Stomach (tissue), 19 donors: ENCODE measurements at regions of chr15 and their contacts with region 1.

Region 1: GRCh38 chr15:74889883-74890664 is at the start of gene MPI:
- DNase-seq: peak; percentile 87 to 96
- H3K4me3 ChIP-seq: peak within 1 kb of the TSS; percentile 75 to 93 (median 88)
- H3K27ac ChIP-seq: peak within 1 kb of the TSS; percentile 70 to 90 (median 81)
- H3K4me1 ChIP-seq: peaks cover 12 to 53% (median 35%) of the 10 kb centered on the region in 4 donors
- H3K27me3 ChIP-seq: no peaks in the 10 kb centered on the region
- CTCF ChIP-seq: peak in 4 of 7 experiments; percentile 13 to 36 (median 24)
- EP300 ChIP-seq: no peak
- POLR2A ChIP-seq: peak in 1 of 4 donors; percentile 35
- total RNA-seq, gene MPI: 17.0 to 35.7 (median 20.4) TPM

Region 2: GRCh38 chr15:74768771-74769342 is 121.2 kb before region 1 on chr15:
- intact Hi-C with region 1: no loop called
- DNase-seq: peak; percentile 75
- H3K4me3 ChIP-seq: no peak overlapping the region
- H3K27ac ChIP-seq: no peak overlapping the region
- H3K4me1 ChIP-seq: peaks cover 0 to 18% (median 15%) of the 10 kb centered on the region in 4 donors
- H3K27me3 ChIP-seq: peaks cover 0 to 23% (median 0%) of the 10 kb centered on the region in 3 donors
- CTCF ChIP-seq: peak in 5 of 7 experiments; percentile 59 to 87 (median 74)
- EP300 ChIP-seq: no peak
- POLR2A ChIP-seq: no peak

Region 3: GRCh38 chr15:74842581-74843444 is 47.3 kb before region 1 on chr15 and contains the start of gene ULK3:
- intact Hi-C with region 1: loop called (anchors 10 kb)
- DNase-seq: peak; percentile 93 to 97
- H3K4me3 ChIP-seq: peak within 1 kb of the TSS; percentile 75 to 84 (median 80)
- H3K27ac ChIP-seq: peak within 1 kb of the TSS; percentile 85 to 93 (median 88)
- H3K4me1 ChIP-seq: peaks cover 22 to 56% (median 37%) of the 10 kb centered on the region in 4 donors
- H3K27me3 ChIP-seq: no peaks in the 10 kb centered on the region
- CTCF ChIP-seq: peak in 5 of 7 experiments; percentile 55 to 90 (median 64)
- EP300 ChIP-seq: no peak
- POLR2A ChIP-seq: no peak
- total RNA-seq, gene ULK3: 25.0 to 251 (median 50.7) TPM

Region 4: GRCh38 chr15:75029378-75030022 is 139.4 kb after region 1 on chr15:
- intact Hi-C with region 1: no loop called
- DNase-seq: peak; percentile 96
- H3K4me3 ChIP-seq: peak overlapping the region; percentile 2 to 23 (median 20)
- H3K27ac ChIP-seq: peak overlapping the region; percentile 5 to 75 (median 74)
- H3K4me1 ChIP-seq: peaks cover 16 to 49% (median 38%) of the 10 kb centered on the region in 4 donors
- H3K27me3 ChIP-seq: no peaks in the 10 kb centered on the region
- CTCF ChIP-seq: peak in 5 of 7 experiments; percentile 90 to 98 (median 94)
- EP300 ChIP-seq: no peak
- POLR2A ChIP-seq: no peak